H1 (cell line): ENCODE measurements at regions of chr22 and their contacts with region 1.

Region 1: DNA sequence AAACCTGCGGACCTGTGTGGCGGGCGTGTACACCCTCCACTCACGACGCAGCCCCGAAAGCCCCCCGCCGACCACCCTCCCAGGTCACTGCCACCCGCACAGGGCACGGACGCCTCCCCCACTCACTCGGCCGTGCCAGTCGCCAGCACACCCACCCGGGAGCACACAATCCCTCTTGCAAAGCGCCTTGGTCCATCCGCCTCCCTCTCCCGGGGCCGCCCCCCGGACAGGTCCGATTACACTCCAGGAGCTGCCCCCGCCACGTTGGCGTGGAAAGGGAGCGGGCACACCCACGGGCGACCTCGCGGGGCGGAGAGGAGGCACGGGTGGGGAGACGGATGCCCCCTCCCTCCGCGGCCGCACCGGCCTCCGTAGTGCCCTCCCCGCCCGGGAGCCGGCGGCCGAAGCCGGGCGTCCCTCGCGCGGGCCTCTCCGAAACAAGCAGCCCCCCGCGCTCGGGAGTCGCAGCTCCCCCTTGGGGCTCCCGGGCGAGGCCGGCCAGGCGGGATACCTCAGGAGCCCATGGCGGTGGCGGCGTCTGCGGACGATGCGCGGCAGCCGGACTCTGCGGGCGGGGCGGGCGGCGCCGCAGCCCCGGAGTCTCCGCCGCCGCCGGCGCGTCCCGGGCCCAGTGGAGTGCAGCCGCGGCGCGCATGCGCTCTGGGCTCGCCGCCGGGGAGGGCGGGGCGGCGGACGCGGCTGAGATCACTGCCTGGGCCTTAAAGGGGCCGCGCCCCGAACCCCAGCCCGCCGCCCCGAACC is at the start of gene TMEM184B:
- DNase-seq: peak in 1 of 2 experiments; percentile 88
- H3K4me3 ChIP-seq: peak within 1 kb of the TSS; percentile 84 to 97 (median 90)
- H3K27ac ChIP-seq: 0 out of 2 replicates have a peak within 1 kb of the TSS, but pooled peaks have one; percentile 14
- H3K4me1 ChIP-seq: peaks cover 10 to 21% (median 15%) of the 10 kb centered on the region in 4 experiments
- H3K27me3 ChIP-seq: no peaks in the 10 kb centered on the region
- CTCF ChIP-seq: no peak
- EP300 ChIP-seq: peak in 1 of 2 experiments; percentile 17; a peak in 1 of 3 replicates
- POLR2A ChIP-seq: peak in 1 of 2 experiments; percentile 27; a peak in 1 of 3 replicates
- RAD21 ChIP-seq: no peak
- total RNA-seq, gene TMEM184B: 79.9 and 81.0 TPM in 2 replicates

Region 2: GRCh38 chr22:38262051-38262795 is 10.3 kb before region 1 on chr22:
- CTCF ChIA-PET with region 1: interaction called, 33 read pairs
- POLR2A ChIA-PET with region 1: interaction called, 8 read pairs
- DNase-seq: peak in 1 of 2 experiments; percentile 84
- H3K4me3 ChIP-seq: no peak overlapping the region
- H3K27ac ChIP-seq: no peak overlapping the region
- H3K4me1 ChIP-seq: peaks cover 4 to 24% (median 10%) of the 10 kb centered on the region in 4 experiments
- H3K27me3 ChIP-seq: no peaks in the 10 kb centered on the region; a peak in 1 of 7 replicates
- CTCF ChIP-seq: peak; percentile 73 to 85 (median 80)
- EP300 ChIP-seq: no peak
- POLR2A ChIP-seq: no peak
- RAD21 ChIP-seq: peak; percentile 74

Region 3: DNA sequence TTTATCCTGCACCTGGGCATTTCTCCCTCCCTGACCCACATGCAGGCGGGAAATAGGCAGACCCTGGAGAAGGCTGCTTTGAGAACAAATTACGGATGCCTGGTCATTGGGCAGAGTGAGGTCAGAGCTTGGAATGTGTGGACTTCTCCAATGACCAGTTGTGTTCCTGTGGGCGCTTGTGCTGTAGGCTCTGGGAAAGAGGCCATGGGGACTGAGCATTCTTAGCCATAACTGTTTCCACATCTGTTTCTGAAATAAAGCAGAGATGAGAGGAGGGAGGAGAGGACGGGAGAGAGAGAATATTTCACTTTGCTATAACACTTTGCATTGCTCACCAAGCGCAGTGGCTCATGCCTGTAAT is 11.5 kb after region 1 on chr22:
- CTCF ChIA-PET with region 1: interaction called, 3 read pairs
- POLR2A ChIA-PET with region 1: interaction called, 81 read pairs
- DNase-seq: no peak
- H3K4me3 ChIP-seq: no peak overlapping the region
- H3K27ac ChIP-seq: no peak overlapping the region
- H3K4me1 ChIP-seq: peaks cover 0 to 3% (median 1%) of the 10 kb centered on the region in 4 experiments; a peak in 3 of 7 replicates
- H3K27me3 ChIP-seq: no peaks in the 10 kb centered on the region
- CTCF ChIP-seq: no peak
- EP300 ChIP-seq: no peak
- POLR2A ChIP-seq: no peak
- RAD21 ChIP-seq: no peak

Region 4: GRCh38 chr22:38291201-38291777 is 18.7 kb after region 1 on chr22:
- CTCF ChIA-PET with region 1: interaction called, 6 read pairs
- POLR2A ChIA-PET with region 1: interaction called, 81 read pairs
- DNase-seq: no peak
- H3K4me3 ChIP-seq: no peak overlapping the region
- H3K27ac ChIP-seq: no peak overlapping the region
- H3K4me1 ChIP-seq: peaks cover 0 to 3% (median 2%) of the 10 kb centered on the region in 4 experiments; a peak in 5 of 7 replicates
- H3K27me3 ChIP-seq: no peaks in the 10 kb centered on the region
- CTCF ChIP-seq: peak in 1 of 3 experiments; percentile 17; a peak in 1 of 4 replicates
- EP300 ChIP-seq: no peak
- POLR2A ChIP-seq: no peak
- RAD21 ChIP-seq: 0 out of 4 replicates have a peak, but pooled peaks of 1 of the 2 experiments have one; percentile 1